ENCODE measurements at regions of chr9 and their contacts with region 1.

Region 1: GRCh38 chr9:131678499-131679111 is 61.3 kb downstream of the RAPGEF1 start:
- DNase-seq: peak; percentile 79 to 93
- H3K4me3 ChIP-seq: peak overlapping the region; percentile 23; the same call in 1 of the 2 replicates
- H3K27ac ChIP-seq: peak overlapping the region; percentile 81
- H3K4me1 ChIP-seq: peaks cover 54% of the 10 kb centered on the region
- H3K27me3 ChIP-seq: no peaks in the 10 kb centered on the region
- CTCF ChIP-seq: no peak

Region 2: DNA sequence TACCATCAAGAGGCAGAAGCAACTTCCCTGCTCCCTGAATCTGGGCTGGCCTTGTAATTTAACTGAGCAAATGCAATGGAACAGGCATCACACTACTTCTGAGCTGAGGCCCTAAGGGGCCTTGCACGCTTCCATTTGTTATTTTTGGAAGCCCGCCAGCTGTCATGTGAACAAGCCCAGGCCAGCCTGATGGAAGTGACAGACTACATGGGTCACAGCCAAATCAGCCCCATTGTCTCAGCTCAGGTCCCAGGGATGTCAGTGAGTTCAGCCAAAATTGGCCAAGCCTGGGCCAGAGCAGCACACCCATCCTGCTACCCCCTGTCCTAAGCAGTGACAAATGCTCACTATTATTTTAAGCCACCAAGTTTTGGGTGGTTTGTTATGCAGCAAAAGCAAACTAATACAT is 60.5 kb before region 1 on chr9:
- CTCF ChIA-PET with region 1: no interaction called
- POLR2A ChIA-PET with region 1: no interaction called
- intact Hi-C with region 1: no loop called
- DNase-seq: peak in 1 of 2 experiments; percentile 21
- H3K4me3 ChIP-seq: no peak overlapping the region
- H3K27ac ChIP-seq: no peak overlapping the region
- H3K4me1 ChIP-seq: no peaks in the 10 kb centered on the region
- H3K27me3 ChIP-seq: no peaks in the 10 kb centered on the region
- CTCF ChIP-seq: no peak

Region 3: DNA sequence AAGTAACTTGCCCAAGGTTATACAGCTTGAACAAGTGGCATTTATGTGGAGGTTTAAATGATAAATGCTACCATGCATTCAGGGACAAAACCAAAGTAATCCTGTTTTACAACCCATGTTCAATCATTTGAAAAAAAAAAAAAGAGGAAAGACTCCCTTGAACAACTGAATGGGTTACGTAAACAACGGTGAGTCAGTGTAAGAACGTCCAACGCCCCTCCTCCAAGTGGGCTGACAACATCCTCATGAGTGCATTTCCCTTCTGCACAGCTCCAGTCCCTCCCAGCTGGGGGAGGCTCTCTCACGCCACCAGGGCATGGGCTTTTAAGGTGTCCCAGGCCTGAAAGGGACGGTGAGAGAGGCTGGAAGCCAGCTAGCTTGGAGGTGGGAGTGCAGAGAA is 43.3 kb before region 1 on chr9:
- CTCF ChIA-PET with region 1: interaction called, 9 read pairs
- POLR2A ChIA-PET with region 1: interaction called, 13 read pairs
- intact Hi-C with region 1: loop called (anchors 2 kb)
- DNase-seq: peak; percentile 89 to 94
- H3K4me3 ChIP-seq: no peak overlapping the region
- H3K27ac ChIP-seq: peak overlapping the region; percentile 76
- H3K4me1 ChIP-seq: peaks cover 24% of the 10 kb centered on the region
- H3K27me3 ChIP-seq: no peaks in the 10 kb centered on the region
- CTCF ChIP-seq: no peak

Region 4: GRCh38 chr9:131697097-131697496 is 18.5 kb after region 1 on chr9:
- CTCF ChIA-PET with region 1: no interaction called
- POLR2A ChIA-PET with region 1: interaction called, 19 read pairs
- intact Hi-C with region 1: no loop called
- DNase-seq: no peak
- H3K4me3 ChIP-seq: no peak overlapping the region
- H3K27ac ChIP-seq: no peak overlapping the region
- H3K4me1 ChIP-seq: no peaks in the 10 kb centered on the region
- H3K27me3 ChIP-seq: no peaks in the 10 kb centered on the region
- CTCF ChIP-seq: no peak

Region 5: GRCh38 chr9:131733541-131734061 is 55.0 kb after region 1 on chr9:
- CTCF ChIA-PET with region 1: no interaction called
- POLR2A ChIA-PET with region 1: interaction called, 5 read pairs
- intact Hi-C with region 1: loop called (anchors 1 kb)
- DNase-seq: peak; percentile 95 to 99
- H3K4me3 ChIP-seq: peak overlapping the region; percentile 27; the same call in 1 of the 2 replicates
- H3K27ac ChIP-seq: peak overlapping the region; percentile 82
- H3K4me1 ChIP-seq: peaks cover 65% of the 10 kb centered on the region
- H3K27me3 ChIP-seq: no peaks in the 10 kb centered on the region
- CTCF ChIP-seq: no peak

Region 6: DNA sequence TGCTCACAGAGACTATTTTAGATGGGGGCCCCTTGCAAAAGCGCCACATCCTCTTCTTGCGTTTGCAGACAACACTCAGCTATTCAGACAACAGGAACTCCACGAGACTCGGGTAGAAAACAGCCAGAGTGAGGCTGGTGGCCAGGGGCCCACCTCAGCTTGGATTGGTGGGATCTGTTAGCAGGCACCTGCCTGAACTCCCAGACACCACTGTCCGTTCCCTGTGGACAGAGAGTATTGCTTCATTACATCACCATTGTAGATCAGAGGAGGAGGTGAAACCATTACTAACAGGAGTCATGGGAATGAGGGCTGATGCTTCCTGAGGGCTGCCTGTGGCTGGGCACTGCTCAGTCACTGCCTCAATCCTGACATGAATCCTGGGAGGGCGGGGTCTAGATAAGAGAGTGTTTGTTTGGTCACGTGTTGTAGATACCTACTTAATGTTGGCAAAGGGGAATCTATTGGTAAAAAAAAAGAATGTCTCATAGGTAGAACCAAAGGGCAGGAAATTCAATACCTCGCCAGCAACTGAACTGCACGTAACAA is 65.6 kb after region 1 on chr9:
- CTCF ChIA-PET with region 1: no interaction called
- POLR2A ChIA-PET with region 1: no interaction called
- intact Hi-C with region 1: no loop called
- DNase-seq: peak; percentile 27 to 91
- H3K4me3 ChIP-seq: peak overlapping the region; percentile 25; the same call in 1 of the 2 replicates
- H3K27ac ChIP-seq: peak overlapping the region; percentile 85
- H3K4me1 ChIP-seq: peaks cover 23% of the 10 kb centered on the region
- H3K27me3 ChIP-seq: no peaks in the 10 kb centered on the region
- CTCF ChIP-seq: no peak

Measured in PC-9 (cell line).